Aorta (tissue), 5 donors: ENCODE measurements at regions of chr9 and their contacts with region 1.

Region 1: GRCh38 chr9:127611899-127612790 is at the start of gene STXBP1:
- DNase-seq: peak; percentile 89 to 96
- ATAC-seq: peak; percentile 93
- H3K4me3 ChIP-seq: peak within 1 kb of the TSS; percentile 63 to 89
- H3K27ac ChIP-seq: no peak within 1 kb of the TSS
- H3K4me1 ChIP-seq: no peaks in the 10 kb centered on the region
- H3K27me3 ChIP-seq: no peaks in the 10 kb centered on the region
- total RNA-seq, gene STXBP1: 50.0 to 69.0 TPM

Region 2: GRCh38 chr9:127700580-127701255 is 88.6 kb after region 1 on chr9:
- intact Hi-C with region 1: loop called in 1 of 2 experiments (anchors 5 kb)
- DNase-seq: no peak
- ATAC-seq: no peak
- H3K4me3 ChIP-seq: no peak overlapping the region
- H3K27ac ChIP-seq: no peak overlapping the region
- H3K4me1 ChIP-seq: no peaks in the 10 kb centered on the region
- H3K27me3 ChIP-seq: no peaks in the 10 kb centered on the region

Region 3: DNA sequence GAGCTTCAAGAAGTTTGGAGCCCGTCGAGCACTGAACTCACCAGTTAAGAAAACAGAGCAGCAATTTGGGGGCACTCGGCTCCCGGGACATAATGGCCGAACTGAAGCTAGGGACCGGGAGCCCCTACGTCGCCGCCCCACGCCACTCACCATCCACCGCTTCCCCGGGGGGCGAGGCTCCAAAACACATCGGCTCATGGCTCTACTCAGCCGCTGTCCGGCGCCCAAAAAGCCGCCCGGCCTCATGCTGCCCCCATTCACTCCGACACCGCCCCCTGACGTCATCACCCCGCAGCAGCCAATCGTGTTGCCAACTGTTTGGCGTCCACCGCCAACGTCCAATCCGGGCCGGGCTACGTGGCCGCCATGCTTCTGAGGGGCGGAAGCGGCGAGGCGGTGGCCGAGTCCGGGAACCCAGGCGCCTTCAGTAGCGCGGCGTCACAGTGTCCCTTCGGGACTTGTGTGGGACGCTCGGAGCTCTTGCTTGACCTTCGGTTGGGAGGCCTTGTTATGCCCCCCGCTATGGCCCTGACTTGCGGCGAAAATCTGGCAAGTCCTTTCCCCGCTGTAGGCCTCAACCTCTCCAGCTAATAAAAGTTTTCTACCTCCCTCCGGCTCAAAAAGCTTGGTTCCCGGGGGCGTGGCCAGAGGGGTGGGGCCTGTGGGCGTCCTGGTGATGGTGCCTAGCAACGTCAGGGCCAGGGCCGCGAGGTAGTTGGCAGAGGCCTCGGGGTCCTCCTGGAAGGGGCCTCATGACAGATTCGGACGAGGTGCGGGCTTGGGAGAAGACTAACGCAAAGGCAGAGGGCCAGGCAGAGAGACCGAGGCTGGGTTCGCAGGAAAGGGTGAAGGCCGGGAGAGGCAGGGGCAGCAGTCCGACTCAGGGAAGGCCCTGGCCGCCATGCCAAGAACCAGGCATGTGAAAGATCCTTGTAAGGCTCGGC is 103.5 kb after region 1 on chr9 and contains the starts of genes PTRH1 and TTC16:
- intact Hi-C with region 1: loop called in 1 of 2 experiments (anchors 5 kb)
- DNase-seq: peak; percentile 99 to 100
- ATAC-seq: peak; percentile 97
- H3K4me3 ChIP-seq: peak within 1 kb of the TSS; percentile 39 to 52
- H3K27ac ChIP-seq: peak within 1 kb of the TSS in 1 of 2 donors; percentile 49
- H3K4me1 ChIP-seq: no peaks in the 10 kb centered on the region
- H3K27me3 ChIP-seq: no peaks in the 10 kb centered on the region
- total RNA-seq, gene PTRH1: 9.8 to 12.2 TPM
- total RNA-seq, gene TTC16: 0.16 to 0.30 TPM